IMR-90 (cell line): ENCODE measurements at regions of chr11 and their contacts with region 1.

Region 1: GRCh38 chr11:125180413-125181305 is 16.1 kb downstream of the PKNOX2 start:
- DNase-seq: peak; percentile 82
- ATAC-seq: peak; percentile 83
- H3K4me3 ChIP-seq: no peak overlapping the region
- H3K27ac ChIP-seq: no peak overlapping the region
- H3K4me1 ChIP-seq: peaks cover 5% of the 10 kb centered on the region; the same call in 1 of the 2 replicates
- H3K27me3 ChIP-seq: peaks cover 3% of the 10 kb centered on the region; the same call in 1 of the 2 replicates
- CTCF ChIP-seq: no peak
- POLR2A ChIP-seq: no peak
- RAD21 ChIP-seq: no peak

Region 2: DNA sequence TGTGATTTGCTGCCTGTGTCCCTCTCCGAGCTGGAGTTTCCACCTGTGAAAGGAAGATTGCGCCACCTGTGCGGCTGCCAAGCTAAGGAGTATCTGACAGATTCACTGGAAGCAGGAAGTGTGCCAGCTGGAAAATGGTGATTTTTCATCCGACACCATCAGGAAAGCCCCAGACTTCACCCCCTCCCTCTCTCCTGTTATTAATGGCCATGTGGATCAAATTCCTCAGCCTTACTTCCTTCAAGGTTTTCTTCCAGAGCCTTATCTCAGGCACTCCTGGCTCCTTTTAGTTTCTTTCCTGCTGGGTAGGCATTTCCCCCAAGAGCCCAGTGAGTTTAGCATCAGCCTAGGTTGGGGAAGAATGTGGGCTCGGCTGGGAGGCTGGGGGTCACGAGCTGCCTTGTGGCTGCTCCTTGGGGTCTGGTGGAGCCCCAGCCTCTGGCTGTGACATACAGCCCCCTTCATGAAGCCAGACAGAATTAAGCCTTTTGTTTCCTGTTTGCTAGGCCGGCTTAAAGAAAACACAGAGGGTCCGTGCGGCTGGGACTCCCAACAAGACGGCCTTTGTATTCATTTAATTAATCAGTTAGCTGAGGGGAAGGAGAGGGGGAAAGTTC is 21.0 kb after region 1 on chr11:
- CTCF ChIA-PET with region 1: no interaction called
- POLR2A ChIA-PET with region 1: no interaction called
- dilution Hi-C with region 1: no loop called
- in situ Hi-C with region 1: no loop called
- intact Hi-C with region 1: no loop called
- DNase-seq: peak; percentile 7
- ATAC-seq: no peak
- H3K4me3 ChIP-seq: no peak overlapping the region
- H3K27ac ChIP-seq: no peak overlapping the region
- H3K4me1 ChIP-seq: peaks cover 2% of the 10 kb centered on the region; the same call in 1 of the 2 replicates
- H3K27me3 ChIP-seq: peaks cover 7% of the 10 kb centered on the region; the same call in 1 of the 2 replicates
- CTCF ChIP-seq: no peak
- POLR2A ChIP-seq: no peak
- RAD21 ChIP-seq: no peak

Region 3: GRCh38 chr11:125214571-125215565 is 34.2 kb after region 1 on chr11:
- CTCF ChIA-PET with region 1: no interaction called
- POLR2A ChIA-PET with region 1: no interaction called
- dilution Hi-C with region 1: no loop called
- in situ Hi-C with region 1: no loop called
- intact Hi-C with region 1: loop called (anchors 5 kb)
- DNase-seq: no peak
- ATAC-seq: no peak
- H3K4me3 ChIP-seq: no peak overlapping the region
- H3K27ac ChIP-seq: no peak overlapping the region
- H3K4me1 ChIP-seq: peaks cover 1% of the 10 kb centered on the region; the same call in 1 of the 2 replicates
- H3K27me3 ChIP-seq: peaks cover 16% of the 10 kb centered on the region; the same call in 1 of the 2 replicates
- CTCF ChIP-seq: no peak
- POLR2A ChIP-seq: no peak
- RAD21 ChIP-seq: no peak